Panc1 (cell line): ENCODE measurements at regions of chr4 and their contacts with region 1.

Region 1: GRCh38 chr4:72326692-72327632 is 242.1 kb downstream of the ADAMTS3 start:
- DNase-seq: no peak
- ATAC-seq: no peak
- H3K4me3 ChIP-seq: no peak overlapping the region
- H3K27ac ChIP-seq: no peak overlapping the region
- H3K4me1 ChIP-seq: no peaks in the 10 kb centered on the region
- H3K27me3 ChIP-seq: no peaks in the 10 kb centered on the region
- CTCF ChIP-seq: peak; percentile 56; the same call in 1 of the 2 replicates

Region 2: GRCh38 chr4:72468904-72469502 is 142.0 kb after region 1 on chr4:
- CTCF ChIA-PET with region 1: no interaction called
- POLR2A ChIA-PET with region 1: no interaction called
- in situ Hi-C with region 1: no loop called
- intact Hi-C with region 1: loop called (anchors 2 kb)
- DNase-seq: no peak
- ATAC-seq: no peak
- H3K4me3 ChIP-seq: no peak overlapping the region
- H3K27ac ChIP-seq: no peak overlapping the region
- H3K4me1 ChIP-seq: no peaks in the 10 kb centered on the region
- H3K27me3 ChIP-seq: no peaks in the 10 kb centered on the region
- CTCF ChIP-seq: peak; percentile 31; the same call in 1 of the 2 replicates

Region 3: GRCh38 chr4:73019462-73020047 is 692.6 kb after region 1 on chr4:
- CTCF ChIA-PET with region 1: no interaction called
- POLR2A ChIA-PET with region 1: no interaction called
- in situ Hi-C with region 1: no loop called
- intact Hi-C with region 1: loop called (anchors 5 kb)
- DNase-seq: peak; percentile 27
- ATAC-seq: no peak
- H3K4me3 ChIP-seq: no peak overlapping the region
- H3K27ac ChIP-seq: no peak overlapping the region
- H3K4me1 ChIP-seq: no peaks in the 10 kb centered on the region
- H3K27me3 ChIP-seq: no peaks in the 10 kb centered on the region
- CTCF ChIP-seq: peak; percentile 56; the same call in 1 of the 2 replicates